ENCODE measurements at regions of chr7 and their contacts with region 1.

Region 1: GRCh38 chr7:100563809-100564400 is 9.8 kb downstream of the SAP25 start:
- DNase-seq: peak; percentile 84 to 97
- H3K4me3 ChIP-seq: no peak overlapping the region
- CTCF ChIP-seq: peak in 1 of 3 donors; percentile 89
- POLR2A ChIP-seq: no peak

Region 2: GRCh38 chr7:100469227-100470044 is 94.5 kb before region 1 on chr7:
- intact Hi-C with region 1: loop called (anchors 2 kb)
- DNase-seq: peak; percentile 78 to 98
- H3K4me3 ChIP-seq: no peak overlapping the region
- CTCF ChIP-seq: peak in 1 of 3 donors; percentile 72
- POLR2A ChIP-seq: no peak

Region 3: GRCh38 chr7:100516135-100516812 is 47.6 kb before region 1 on chr7:
- intact Hi-C with region 1: no loop called
- DNase-seq: peak; percentile 78 to 92
- H3K4me3 ChIP-seq: no peak overlapping the region
- CTCF ChIP-seq: no peak
- POLR2A ChIP-seq: no peak